Astrocyte of the cerebellum (primary cell): ENCODE measurements at regions of chr2 and their contacts with region 1.

Region 1: GRCh38 chr2:134460583-134460998 is 206.7 kb downstream of the MGAT5 start:
- DNase-seq: peak; percentile 41
- H3K4me3 ChIP-seq: no peak overlapping the region
- CTCF ChIP-seq: peak; percentile 76

Region 2: GRCh38 chr2:134918526-134919340 is 458.1 kb after region 1 on chr2 and contains the start of gene CCNT2:
- in situ Hi-C with region 1: loop called (anchors 25 kb)
- DNase-seq: peak; percentile 98
- H3K4me3 ChIP-seq: peak within 1 kb of the TSS; percentile 99
- CTCF ChIP-seq: no peak